SK-N-SH (cell line): ENCODE measurements at regions of chr3 and their contacts with region 1.

Region 1: DNA sequence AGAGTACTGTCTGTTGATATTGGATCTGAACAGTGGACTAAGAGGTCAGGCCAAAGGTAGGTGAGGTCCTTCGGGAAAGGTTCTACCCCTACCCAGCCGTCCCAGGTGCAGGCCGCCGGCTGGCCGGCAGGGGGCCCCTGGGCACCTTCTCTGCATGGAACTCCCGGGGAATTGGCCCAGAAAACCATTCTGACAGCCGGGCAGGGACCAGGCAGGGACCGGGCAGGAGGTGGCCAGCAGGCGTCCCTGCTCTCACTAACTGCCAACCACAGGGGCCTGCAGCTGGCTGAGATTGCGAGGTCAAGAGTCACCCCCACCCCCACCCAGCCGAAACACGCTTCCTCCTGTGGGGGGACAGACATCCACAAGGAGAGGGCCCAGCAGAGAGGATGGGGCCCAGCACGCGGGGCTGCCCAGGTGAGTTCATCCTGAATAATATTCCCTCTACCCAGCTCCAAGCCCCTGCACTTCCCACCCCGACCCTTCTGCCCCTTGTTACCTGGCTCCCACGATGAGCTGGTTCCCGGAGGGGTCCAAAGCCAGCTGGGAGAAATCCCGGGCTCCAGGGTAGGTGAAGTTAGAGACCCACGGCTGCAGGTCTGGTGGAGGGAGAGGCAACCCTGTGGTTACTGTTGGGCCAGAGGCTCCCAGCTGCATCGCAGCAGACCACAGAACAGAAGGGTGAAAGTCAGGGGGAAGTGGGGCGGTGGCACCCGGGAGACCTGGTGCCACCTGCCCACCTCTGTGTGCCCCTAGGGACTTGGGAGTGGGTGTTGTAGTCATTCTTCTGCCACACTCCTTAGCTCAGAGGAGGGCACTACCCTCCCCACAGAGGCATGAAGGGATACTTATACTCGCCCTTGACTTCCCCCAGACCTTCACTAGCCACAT is 84.4 kb downstream of the SEMA5B start:
- DNase-seq: peak; percentile 91
- H3K4me3 ChIP-seq: no peak overlapping the region; a peak in 1 of 4 replicates
- H3K27ac ChIP-seq: no peak overlapping the region
- H3K4me1 ChIP-seq: peaks cover 10 to 20% of the 10 kb centered on the region in 2 experiments; a peak in 2 of 4 replicates
- H3K27me3 ChIP-seq: no peaks in the 10 kb centered on the region
- CTCF ChIP-seq: peak; percentile 95
- EP300 ChIP-seq: no peak
- RAD21 ChIP-seq: peak; percentile 92

Region 2: DNA sequence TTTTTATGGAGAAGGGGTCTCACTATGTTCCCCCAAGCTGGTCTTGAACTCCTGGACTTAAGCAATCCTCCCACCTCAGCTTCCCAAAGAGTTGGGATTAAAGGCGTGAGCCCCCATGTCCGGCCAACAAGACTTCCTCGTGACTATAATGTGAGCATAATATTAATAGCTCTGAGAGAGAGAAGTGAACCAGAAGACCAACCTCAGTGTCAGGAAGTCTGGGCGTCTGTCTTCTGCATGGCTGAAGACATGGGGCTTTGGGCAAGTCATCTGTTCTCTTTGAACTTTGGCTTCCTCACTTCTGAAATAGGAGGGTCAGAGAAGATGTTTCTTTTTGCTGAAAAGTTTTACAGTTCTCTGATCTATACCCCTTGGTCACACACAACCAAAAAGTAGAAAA is 56.2 kb before region 1 on chr3:
- CTCF ChIA-PET with region 1: interaction called, 12 read pairs
- POLR2A ChIA-PET with region 1: no interaction called
- DNase-seq: no peak
- H3K4me3 ChIP-seq: no peak overlapping the region
- H3K27ac ChIP-seq: no peak overlapping the region
- H3K4me1 ChIP-seq: peaks cover 0 to 11% of the 10 kb centered on the region in 2 experiments; a peak in 1 of 4 replicates
- H3K27me3 ChIP-seq: no peaks in the 10 kb centered on the region
- CTCF ChIP-seq: no peak
- EP300 ChIP-seq: no peak
- RAD21 ChIP-seq: no peak

Region 3: GRCh38 chr3:122969585-122970453 is 26.6 kb after region 1 on chr3:
- CTCF ChIA-PET with region 1: interaction called, 45 read pairs
- POLR2A ChIA-PET with region 1: no interaction called
- DNase-seq: no peak
- H3K4me3 ChIP-seq: no peak overlapping the region
- H3K27ac ChIP-seq: no peak overlapping the region
- H3K4me1 ChIP-seq: peaks cover 15 to 36% of the 10 kb centered on the region in 2 experiments
- H3K27me3 ChIP-seq: no peaks in the 10 kb centered on the region
- CTCF ChIP-seq: no peak
- EP300 ChIP-seq: no peak
- RAD21 ChIP-seq: no peak

Region 4: DNA sequence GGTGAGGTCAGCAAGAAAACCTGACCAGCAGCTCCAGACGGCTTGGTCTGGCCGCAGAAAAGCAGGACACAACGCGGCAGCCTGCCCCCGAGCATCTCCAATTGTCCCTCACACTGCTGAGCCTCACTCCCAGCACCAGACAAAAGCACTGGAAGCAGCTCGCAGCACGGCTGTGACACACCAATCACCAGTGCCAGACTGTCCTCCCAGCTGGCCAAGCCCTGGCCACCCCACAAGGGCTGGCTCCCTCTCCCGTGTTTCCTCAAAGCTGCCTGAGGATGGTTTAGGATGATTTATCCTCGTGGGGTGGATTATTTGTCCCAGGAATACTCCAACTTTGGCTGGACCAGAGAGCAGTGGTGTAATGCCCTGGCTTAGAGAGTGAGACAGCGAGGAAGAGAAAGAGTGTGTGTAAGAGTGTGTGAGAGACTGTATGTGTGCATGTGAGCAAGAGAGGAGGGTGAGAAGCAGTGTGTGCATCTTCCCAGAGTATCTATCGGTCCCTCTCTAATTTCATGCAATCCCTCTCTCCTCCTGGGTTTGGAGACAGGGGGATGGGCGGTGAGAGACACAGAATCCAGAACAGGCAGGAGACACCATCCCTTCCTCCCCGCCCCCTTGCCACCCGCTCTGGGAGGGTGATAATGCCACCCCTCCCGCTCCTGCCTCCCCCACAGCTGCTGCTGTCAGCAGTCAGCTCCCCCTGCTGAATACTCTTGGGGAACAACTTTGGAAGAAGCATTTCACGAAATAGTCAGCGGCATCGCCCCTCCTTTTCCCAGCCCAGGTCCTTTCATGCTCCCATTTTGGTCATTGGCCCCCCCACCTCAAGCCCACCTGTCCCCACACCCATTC is 50.2 kb after region 1 on chr3:
- CTCF ChIA-PET with region 1: interaction called, 26 read pairs
- POLR2A ChIA-PET with region 1: no interaction called
- DNase-seq: peak; percentile 70
- H3K4me3 ChIP-seq: peak overlapping the region in 1 of 2 experiments; percentile 6; a peak in 1 of 4 replicates
- H3K27ac ChIP-seq: peak overlapping the region in 1 of 2 experiments; percentile 62; a peak in 2 of 4 replicates
- H3K4me1 ChIP-seq: peaks cover 0 to 37% of the 10 kb centered on the region in 2 experiments; a peak in 1 of 4 replicates
- H3K27me3 ChIP-seq: peaks cover 13% of the 10 kb centered on the region; the same call in 1 of the 2 replicates
- CTCF ChIP-seq: no peak
- EP300 ChIP-seq: no peak
- RAD21 ChIP-seq: 0 out of 2 replicates have a peak, but pooled peaks have one; percentile 4

Region 5: DNA sequence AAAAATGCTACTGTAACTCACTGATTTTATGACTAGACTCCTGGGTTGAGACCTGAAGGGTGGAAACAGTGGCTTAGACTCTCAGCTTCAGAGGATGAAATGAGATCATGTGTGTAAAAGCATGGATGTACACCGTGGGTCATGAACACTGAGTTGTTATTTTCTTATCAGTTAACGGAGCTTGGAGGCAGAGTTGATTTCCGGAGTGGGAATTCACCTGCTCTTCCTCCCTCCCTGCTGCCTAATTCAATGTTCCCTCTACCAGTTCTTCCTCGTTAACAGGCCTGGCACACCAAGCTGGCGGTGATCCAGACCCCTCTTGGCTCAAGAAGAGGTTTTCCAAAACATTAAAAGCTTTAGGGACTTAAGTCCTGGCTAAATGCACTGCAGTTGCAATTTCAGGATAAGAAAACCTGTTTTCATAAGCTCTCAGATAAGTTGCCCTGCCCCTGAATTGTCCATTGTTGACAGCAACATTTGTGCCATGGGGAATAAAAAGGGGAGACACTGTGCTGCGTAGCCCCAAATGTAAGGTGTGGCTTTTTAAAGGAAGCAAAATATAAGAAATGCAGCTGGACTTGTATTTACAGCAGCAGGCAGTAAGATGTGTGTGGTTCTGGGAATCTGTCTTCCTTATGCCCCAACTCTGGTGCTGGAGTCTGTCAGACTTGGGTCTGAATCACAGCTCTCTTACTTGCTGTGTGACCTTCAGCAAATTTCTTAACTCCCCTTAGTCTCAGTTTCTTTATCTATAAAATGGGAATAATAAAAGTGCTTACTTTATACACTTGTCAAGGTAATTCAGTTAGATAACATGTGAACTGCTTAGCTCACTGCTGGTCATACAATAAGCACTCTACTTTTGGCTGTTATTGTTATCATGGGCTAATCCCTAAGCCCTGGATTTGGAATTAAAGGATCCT is 133.6 kb after region 1 on chr3:
- CTCF ChIA-PET with region 1: interaction called, 13 read pairs
- POLR2A ChIA-PET with region 1: no interaction called
- DNase-seq: peak; percentile 45
- H3K4me3 ChIP-seq: no peak overlapping the region
- H3K27ac ChIP-seq: peak overlapping the region; percentile 21 to 80; a peak in 3 of 4 replicates
- H3K4me1 ChIP-seq: peaks cover 36 to 52% of the 10 kb centered on the region in 2 experiments
- H3K27me3 ChIP-seq: no peaks in the 10 kb centered on the region
- CTCF ChIP-seq: no peak
- EP300 ChIP-seq: peak in 1 of 2 experiments; percentile 71; a peak in 1 of 4 replicates
- RAD21 ChIP-seq: no peak; the same call in 1 of the 2 replicates

Region 6: GRCh38 chr3:123169492-123169929 is 226.3 kb after region 1 on chr3:
- CTCF ChIA-PET with region 1: no interaction called
- POLR2A ChIA-PET with region 1: no interaction called
- DNase-seq: no peak
- H3K4me3 ChIP-seq: no peak overlapping the region
- H3K27ac ChIP-seq: no peak overlapping the region
- H3K4me1 ChIP-seq: no peaks in the 10 kb centered on the region
- H3K27me3 ChIP-seq: no peaks in the 10 kb centered on the region
- CTCF ChIP-seq: no peak
- EP300 ChIP-seq: no peak
- RAD21 ChIP-seq: no peak

Region 7: DNA sequence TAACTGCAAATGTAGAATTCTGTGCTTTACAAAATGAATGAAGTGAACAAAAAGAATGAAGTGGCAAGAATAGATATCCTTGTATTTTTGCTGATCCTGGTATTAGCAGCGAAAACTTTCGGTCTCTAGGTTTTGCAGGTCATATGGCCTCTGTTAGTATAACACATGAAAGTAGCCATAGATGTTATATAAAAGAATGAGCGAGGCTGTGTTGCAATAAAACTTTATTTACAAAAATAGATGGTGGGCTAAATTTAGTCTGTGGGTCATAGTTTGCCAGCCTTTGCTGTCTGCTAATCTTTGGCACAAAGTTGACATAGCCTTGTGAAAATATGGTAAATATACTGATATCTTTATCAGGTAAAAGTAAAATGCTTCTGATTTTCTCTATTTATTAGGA is 293.7 kb after region 1 on chr3:
- CTCF ChIA-PET with region 1: no interaction called
- POLR2A ChIA-PET with region 1: no interaction called
- DNase-seq: no peak
- H3K4me3 ChIP-seq: no peak overlapping the region
- H3K27ac ChIP-seq: no peak overlapping the region
- H3K4me1 ChIP-seq: no peaks in the 10 kb centered on the region
- H3K27me3 ChIP-seq: no peaks in the 10 kb centered on the region
- CTCF ChIP-seq: no peak
- EP300 ChIP-seq: no peak
- RAD21 ChIP-seq: no peak

Region 8: GRCh38 chr3:123876858-123877257 is 933.7 kb after region 1 on chr3:
- CTCF ChIA-PET with region 1: no interaction called
- POLR2A ChIA-PET with region 1: no interaction called
- DNase-seq: no peak
- H3K4me3 ChIP-seq: no peak overlapping the region
- H3K27ac ChIP-seq: no peak overlapping the region; a peak in 1 of 4 replicates
- H3K4me1 ChIP-seq: peaks cover 13 to 25% of the 10 kb centered on the region in 2 experiments; a peak in 3 of 4 replicates
- H3K27me3 ChIP-seq: no peaks in the 10 kb centered on the region
- CTCF ChIP-seq: peak; percentile 46
- EP300 ChIP-seq: no peak
- RAD21 ChIP-seq: no peak